Left cardiac atrium (tissue), 4 donors: ENCODE measurements at regions of chr11 and their contacts with region 1.

Region 1: GRCh38 chr11:15819679-15820286 is 536.6 kb downstream of the SOX6 start:
- DNase-seq: peak; percentile 75
- ATAC-seq: peak; percentile 80 to 91

Region 2: DNA sequence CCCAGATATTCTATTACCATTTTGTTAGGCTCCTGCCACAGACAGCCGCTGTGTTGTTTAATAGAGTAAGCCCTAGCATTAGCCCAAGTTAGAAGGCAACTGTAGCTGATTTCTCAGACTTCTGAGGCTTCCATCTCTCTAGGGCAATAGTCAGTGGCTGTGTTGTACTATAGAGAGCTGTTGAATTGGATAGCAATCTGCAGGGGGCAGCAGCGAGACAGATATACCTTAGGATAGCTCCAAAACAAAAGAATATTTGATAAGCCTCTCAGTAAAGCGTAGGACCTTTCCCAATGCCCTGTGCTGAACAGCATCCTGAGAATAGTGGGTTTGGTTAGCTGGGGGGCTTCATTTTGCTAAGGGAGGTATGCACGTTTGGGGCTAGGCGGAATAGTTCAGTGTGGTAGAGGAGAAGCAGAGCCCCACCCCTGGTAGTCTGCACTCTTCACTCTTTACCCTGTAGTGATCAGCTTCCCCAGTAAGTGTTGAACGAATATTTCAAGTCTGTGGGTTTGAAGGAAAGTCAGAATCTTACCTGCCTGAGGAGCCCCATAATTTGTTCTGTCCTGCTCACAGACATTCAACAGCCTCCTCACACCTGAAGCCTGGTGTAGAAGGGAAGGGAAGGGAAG is 190.0 kb before region 1 on chr11:
- intact Hi-C with region 1: no loop called
- DNase-seq: no peak
- ATAC-seq: peak in 1 of 2 donors; percentile 37

Region 3: DNA sequence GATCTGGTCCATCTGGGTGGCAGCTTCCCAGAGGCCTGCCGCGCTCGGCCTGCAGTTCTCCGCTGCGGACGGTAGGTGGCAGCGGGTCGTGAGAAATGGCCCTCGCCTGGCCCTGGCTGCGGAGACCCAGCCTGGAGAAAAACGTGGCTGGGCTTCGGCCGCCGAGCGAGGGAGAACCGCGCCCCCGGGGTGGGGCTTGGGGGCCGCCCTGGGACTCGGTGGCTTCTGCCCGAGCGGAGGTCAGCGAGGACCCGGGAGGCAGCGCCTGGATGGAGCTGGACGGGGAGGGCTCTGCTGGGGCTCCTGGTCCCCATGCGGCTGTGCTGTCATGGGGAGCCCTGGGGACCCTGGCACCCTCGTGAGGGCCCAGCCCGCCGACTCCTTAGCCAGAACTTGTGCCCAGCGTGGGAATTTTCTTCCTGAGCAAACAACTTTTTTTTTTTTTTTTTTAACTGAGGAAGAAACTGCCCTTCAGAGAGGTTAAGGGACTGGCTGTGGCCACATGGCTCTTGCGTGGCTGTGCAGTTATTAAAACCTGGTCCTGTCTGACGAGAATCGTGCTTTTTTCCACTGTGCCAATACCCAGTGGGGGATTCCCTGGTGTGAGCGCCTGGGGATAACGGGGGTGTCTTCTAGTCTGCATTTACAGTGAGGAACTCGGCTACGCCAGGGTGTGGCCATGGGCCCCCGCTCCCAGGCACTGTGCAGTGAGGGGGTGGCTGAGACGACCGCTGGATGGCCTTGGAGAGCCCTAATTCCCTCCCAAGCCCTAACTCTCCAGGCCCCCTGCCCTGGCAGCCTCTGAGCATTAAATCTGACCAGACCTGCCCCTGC is 169.5 kb before region 1 on chr11:
- intact Hi-C with region 1: loop called in 1 of 2 experiments (anchors 5 kb)
- DNase-seq: peak; percentile 96
- ATAC-seq: peak; percentile 99

Region 4: DNA sequence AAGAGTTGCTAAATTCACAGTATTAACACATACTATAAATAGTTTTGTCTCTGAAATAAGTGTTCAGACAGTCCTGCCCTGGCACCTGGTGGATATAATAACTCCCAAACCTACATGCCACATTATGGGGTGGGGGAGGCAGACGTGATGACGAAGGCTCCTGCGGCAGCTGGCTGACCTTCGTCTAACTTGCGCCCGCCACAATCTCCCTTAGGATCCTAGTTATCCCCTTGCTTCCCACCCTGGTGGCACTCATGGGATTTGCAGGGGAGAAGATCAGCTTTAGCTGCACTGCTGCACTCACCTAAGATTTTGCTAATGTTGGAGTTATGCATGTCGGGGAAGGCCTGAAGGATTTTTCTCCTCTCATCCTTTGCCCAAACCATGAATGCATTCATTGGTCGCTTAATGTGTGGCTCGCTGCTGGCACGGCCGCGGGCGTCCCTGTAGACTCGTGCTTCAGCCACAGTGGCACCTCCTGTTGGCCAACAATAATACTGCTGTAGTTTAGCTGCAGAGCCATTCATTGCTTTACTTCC is 169.0 kb after region 1 on chr11:
- intact Hi-C with region 1: loop called in 1 of 2 experiments (anchors 10 kb)
- DNase-seq: peak; percentile 42
- ATAC-seq: peak; percentile 90 to 93

Region 5: GRCh38 chr11:16613512-16614381 is 794.0 kb after region 1 on chr11:
- intact Hi-C with region 1: loop called in 1 of 2 experiments (anchors 10 kb)
- DNase-seq: peak; percentile 91
- ATAC-seq: peak; percentile 96 to 97